ENCODE measurements at regions of chr6 and their contacts with region 1.

Region 1: GRCh38 chr6:88989215-88989614 is 25.8 kb upstream of the RNGTT start:
- DNase-seq: no peak
- H3K4me3 ChIP-seq: no peak overlapping the region
- H3K27ac ChIP-seq: no peak overlapping the region
- H3K4me1 ChIP-seq: no peaks in the 10 kb centered on the region
- H3K27me3 ChIP-seq: no peaks in the 10 kb centered on the region
- CTCF ChIP-seq: no peak
- EP300 ChIP-seq: no peak
- POLR2A ChIP-seq: no peak

Region 2: GRCh38 chr6:89352278-89353117 is 363.3 kb after region 1 on chr6 and contains the start of gene UBE2J1:
- intact Hi-C with region 1: loop called (anchors 5 kb)
- DNase-seq: peak; percentile 96
- H3K4me3 ChIP-seq: peak within 1 kb of the TSS; percentile 75 to 92 (median 84)
- H3K27ac ChIP-seq: peak within 1 kb of the TSS; percentile 96 to 98 (median 98)
- H3K4me1 ChIP-seq: peaks cover 29 to 52% (median 46%) of the 10 kb centered on the region in 4 donors
- H3K27me3 ChIP-seq: no peaks in the 10 kb centered on the region
- CTCF ChIP-seq: peak in 1 of 3 experiments; percentile 2
- EP300 ChIP-seq: no peak
- POLR2A ChIP-seq: peak; percentile 86
- total RNA-seq, gene UBE2J1: 31.0 to 36.6 (median 33.6) TPM

Region 3: GRCh38 chr6:89368107-89368506 is 378.9 kb after region 1 on chr6:
- intact Hi-C with region 1: no loop called
- DNase-seq: no peak
- H3K4me3 ChIP-seq: no peak overlapping the region
- H3K27ac ChIP-seq: peak overlapping the region in 1 of 4 donors; percentile 14
- H3K4me1 ChIP-seq: peaks cover 18 to 26% (median 23%) of the 10 kb centered on the region in 4 donors
- H3K27me3 ChIP-seq: no peaks in the 10 kb centered on the region
- CTCF ChIP-seq: peak; percentile 58 to 84 (median 59)
- EP300 ChIP-seq: no peak
- POLR2A ChIP-seq: no peak

Measured in esophagus muscularis mucosa (tissue), 4 donors.